Posterior cingulate gyrus (tissue), 11 donors: ENCODE measurements at regions of chr3 and their contacts with region 1.

Region 1: DNA sequence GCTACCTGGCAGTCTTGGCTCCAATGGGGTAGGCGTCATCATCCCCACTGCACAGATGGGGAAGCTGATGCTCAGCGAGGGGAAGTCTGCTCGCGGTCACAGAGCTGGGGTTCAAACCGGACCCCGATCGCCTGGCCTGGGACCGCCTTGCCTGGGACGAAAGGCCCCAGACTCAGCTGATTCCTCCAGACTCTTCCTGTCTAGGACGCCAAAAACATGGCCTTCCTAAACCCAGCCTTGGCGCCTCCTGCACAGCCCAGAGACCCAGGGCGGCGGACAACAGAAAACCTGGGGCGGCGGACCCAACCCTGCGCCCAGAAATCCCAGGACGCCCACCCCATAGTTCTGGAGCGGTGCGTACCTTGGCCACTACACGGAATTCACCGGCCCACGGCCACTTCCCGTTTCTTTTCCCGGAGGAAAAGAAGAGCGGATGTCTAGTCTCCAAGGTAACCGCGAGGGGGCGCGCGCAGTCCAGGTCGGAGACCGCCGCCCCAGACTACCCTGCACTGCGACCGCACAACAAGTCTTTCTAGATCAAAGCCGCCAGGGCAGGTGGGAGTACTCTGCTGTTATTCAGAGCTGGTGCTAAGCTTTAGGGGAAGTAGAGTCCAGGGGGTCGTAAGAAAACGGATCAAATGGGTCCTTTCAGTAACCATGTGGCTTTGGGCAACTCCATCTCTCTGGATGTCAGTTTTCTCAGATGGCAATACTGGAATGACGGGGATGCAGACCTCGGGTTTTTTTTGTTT is 4.9 kb upstream of the IL17RD start:
- DNase-seq: peak in 9 of 10 donors; percentile 54 to 95 (median 76)

Region 2: GRCh38 chr3:57227204-57227929 is 57.3 kb after region 1 on chr3 and contains the start of gene APPL1:
- intact Hi-C with region 1: loop called (anchors 5 kb)
- DNase-seq: peak; percentile 88 to 99 (median 92)